Heart left ventricle (tissue), 16 donors: ENCODE measurements at regions of chr2 and their contacts with region 1.

Region 1: GRCh38 chr2:164485541-164485940 is 135.7 kb downstream of the GRB14 start:
- DNase-seq: no peak
- ATAC-seq: no peak
- H3K4me3 ChIP-seq: no peak overlapping the region
- H3K27ac ChIP-seq: no peak overlapping the region
- H3K4me1 ChIP-seq: no peaks in the 10 kb centered on the region
- H3K27me3 ChIP-seq: no peaks in the 10 kb centered on the region
- CTCF ChIP-seq: no peak
- POLR2A ChIP-seq: no peak

Region 2: GRCh38 chr2:163182764-163183354 is 1302.7 kb before region 1 on chr2:
- intact Hi-C with region 1: loop called in 2 of 10 experiments (anchors 5 to 10 kb)
- DNase-seq: no peak
- ATAC-seq: no peak
- H3K4me3 ChIP-seq: no peak overlapping the region
- H3K27ac ChIP-seq: no peak overlapping the region
- H3K4me1 ChIP-seq: no peaks in the 10 kb centered on the region
- H3K27me3 ChIP-seq: peaks cover 0 to 9% (median 0%) of the 10 kb centered on the region in 9 donors
- CTCF ChIP-seq: peak; percentile 30 to 68 (median 56)
- POLR2A ChIP-seq: no peak

Region 3: GRCh38 chr2:164430166-164430783 is 55.3 kb before region 1 on chr2:
- intact Hi-C with region 1: no loop called
- DNase-seq: no peak
- ATAC-seq: no peak
- H3K4me3 ChIP-seq: no peak overlapping the region
- H3K27ac ChIP-seq: no peak overlapping the region
- H3K4me1 ChIP-seq: no peaks in the 10 kb centered on the region
- H3K27me3 ChIP-seq: peaks cover 0 to 6% (median 0%) of the 10 kb centered on the region in 9 donors
- CTCF ChIP-seq: peak; percentile 38 to 70 (median 53)
- POLR2A ChIP-seq: no peak